Caco-2 (cell line): ENCODE measurements at regions of chr10 and their contacts with region 1.

Region 1: GRCh38 chr10:12042797-12043651 is at the start of gene UPF2:
- DNase-seq: peak; percentile 100
- H3K4me3 ChIP-seq: peak within 1 kb of the TSS; percentile 94
- H3K4me3 Mint-ChIP-seq: peak within 1 kb of the TSS; percentile 80
- H3K27ac Mint-ChIP-seq: peak within 1 kb of the TSS; percentile 94
- H3K4me1 ChIP-seq: peaks cover 14% of the 10 kb centered on the region
- H3K4me1 Mint-ChIP-seq: peaks cover 18% of the 10 kb centered on the region
- H3K27me3 ChIP-seq: no peaks in the 10 kb centered on the region
- H3K27me3 Mint-ChIP-seq: peaks cover 3% of the 10 kb centered on the region
- CTCF ChIP-seq: no peak
- total RNA-seq, gene UPF2: 40.6 and 40.9 TPM in 2 replicates

Region 2: GRCh38 chr10:11830836-11831519 is 212.0 kb before region 1 on chr10:
- CTCF ChIA-PET with region 1: no interaction called
- POLR2A ChIA-PET with region 1: interaction called, 5 read pairs
- intact Hi-C with region 1: loop called (anchors 5 kb)
- DNase-seq: peak; percentile 83 to 89
- H3K4me3 ChIP-seq: no peak overlapping the region
- H3K4me3 Mint-ChIP-seq: peak overlapping the region; percentile 71
- H3K27ac Mint-ChIP-seq: peak overlapping the region; percentile 91
- H3K4me1 ChIP-seq: peaks cover 69% of the 10 kb centered on the region
- H3K4me1 Mint-ChIP-seq: peaks cover 46% of the 10 kb centered on the region
- H3K27me3 ChIP-seq: no peaks in the 10 kb centered on the region
- H3K27me3 Mint-ChIP-seq: no peaks in the 10 kb centered on the region
- CTCF ChIP-seq: no peak

Region 3: DNA sequence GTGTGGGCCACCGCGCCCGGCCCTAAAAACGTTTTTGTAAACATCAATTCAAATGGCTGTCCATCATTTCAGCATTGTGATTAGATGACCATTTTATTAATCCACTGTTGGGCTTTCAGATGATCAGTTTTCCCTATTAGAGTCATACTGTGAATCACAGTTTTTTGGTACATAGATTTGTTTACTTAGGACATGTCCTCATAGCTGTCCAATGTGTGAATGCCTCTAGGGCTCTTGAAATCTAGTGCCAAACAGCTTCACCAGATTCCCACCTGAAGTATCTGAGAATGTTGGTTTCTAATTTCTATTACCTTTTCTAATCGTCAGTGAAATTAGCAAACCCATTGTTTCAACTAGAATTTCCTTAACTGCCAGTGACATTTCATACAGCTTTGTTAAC is 67.2 kb before region 1 on chr10:
- CTCF ChIA-PET with region 1: no interaction called
- POLR2A ChIA-PET with region 1: no interaction called
- intact Hi-C with region 1: no loop called
- DNase-seq: no peak
- H3K4me3 ChIP-seq: no peak overlapping the region
- H3K4me3 Mint-ChIP-seq: no peak overlapping the region
- H3K27ac Mint-ChIP-seq: no peak overlapping the region
- H3K4me1 ChIP-seq: no peaks in the 10 kb centered on the region
- H3K4me1 Mint-ChIP-seq: no peaks in the 10 kb centered on the region
- H3K27me3 ChIP-seq: no peaks in the 10 kb centered on the region
- H3K27me3 Mint-ChIP-seq: no peaks in the 10 kb centered on the region
- CTCF ChIP-seq: no peak

Region 4: DNA sequence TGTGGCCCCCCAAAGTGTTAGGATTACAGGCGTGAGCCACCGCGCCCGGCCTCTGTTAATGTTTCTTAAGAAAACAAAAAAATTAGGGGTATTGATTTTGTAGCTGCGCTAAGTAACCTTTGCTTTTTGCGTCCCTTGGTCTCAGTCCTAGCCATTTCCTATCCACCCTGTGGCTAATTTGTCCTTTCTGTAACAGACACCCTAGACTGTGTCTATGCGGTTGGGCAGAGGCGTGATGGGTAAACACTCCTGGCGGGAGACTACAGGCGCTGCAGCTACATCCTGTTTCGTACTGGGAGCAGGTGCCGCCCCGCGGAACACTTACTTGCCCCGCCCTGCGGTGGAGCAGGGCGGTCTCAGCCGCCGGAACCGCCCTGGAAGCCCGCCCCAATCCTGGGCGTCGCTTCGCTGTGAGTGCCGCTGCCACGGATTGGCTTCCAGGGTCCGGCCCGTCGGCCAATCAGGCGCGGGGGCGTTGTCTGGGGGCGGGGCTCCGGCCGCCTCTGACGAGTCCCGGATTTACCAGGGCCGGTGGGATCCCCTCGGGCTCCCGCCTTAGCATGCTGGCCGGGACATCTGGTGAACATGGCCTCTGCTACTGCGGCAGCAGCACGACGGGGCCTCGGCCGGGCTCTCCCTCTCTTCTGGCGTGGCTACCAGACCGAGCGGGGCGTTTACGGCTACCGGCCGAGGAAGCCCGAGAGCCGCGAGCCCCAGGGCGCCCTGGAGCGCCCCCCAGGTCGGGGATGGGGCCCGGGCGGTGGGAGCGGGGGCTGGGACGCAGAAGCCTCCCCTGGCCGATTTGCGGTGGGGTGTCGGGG is 25.6 kb after region 1 on chr10 and contains the start of gene DHTKD1:
- CTCF ChIA-PET with region 1: interaction called, 7 read pairs
- POLR2A ChIA-PET with region 1: interaction called, 25 read pairs
- intact Hi-C with region 1: loop called (anchors 1 kb)
- DNase-seq: peak; percentile 99 to 100
- H3K4me3 ChIP-seq: peak within 1 kb of the TSS; percentile 77
- H3K4me3 Mint-ChIP-seq: peak within 1 kb of the TSS; percentile 63
- H3K27ac Mint-ChIP-seq: peak within 1 kb of the TSS; percentile 66
- H3K4me1 ChIP-seq: peaks cover 9% of the 10 kb centered on the region; the same call in 1 of the 2 replicates
- H3K4me1 Mint-ChIP-seq: peaks cover 11% of the 10 kb centered on the region
- H3K27me3 ChIP-seq: no peaks in the 10 kb centered on the region
- H3K27me3 Mint-ChIP-seq: no peaks in the 10 kb centered on the region
- CTCF ChIP-seq: peak in 1 of 2 experiments; percentile 61
- total RNA-seq, gene DHTKD1: 57.8 and 61.4 TPM in 2 replicates

Region 5: GRCh38 chr10:12129222-12130111 is 86.4 kb after region 1 on chr10 and contains the start of gene SEC61A2:
- CTCF ChIA-PET with region 1: interaction called, 5 read pairs
- POLR2A ChIA-PET with region 1: no interaction called
- intact Hi-C with region 1: loop called (anchors 2 kb)
- DNase-seq: peak; percentile 97 to 100
- H3K4me3 ChIP-seq: peak within 1 kb of the TSS; percentile 98
- H3K4me3 Mint-ChIP-seq: peak within 1 kb of the TSS; percentile 79
- H3K27ac Mint-ChIP-seq: peak within 1 kb of the TSS; percentile 87
- H3K4me1 ChIP-seq: 0 out of 2 replicates have a peak, but pooled peaks cover 5% of the 10 kb centered on the region
- H3K4me1 Mint-ChIP-seq: peaks cover 6% of the 10 kb centered on the region
- H3K27me3 ChIP-seq: no peaks in the 10 kb centered on the region
- H3K27me3 Mint-ChIP-seq: no peaks in the 10 kb centered on the region
- CTCF ChIP-seq: no peak
- total RNA-seq, gene SEC61A2: 27.5 and 34.1 TPM in 2 replicates

Region 6: DNA sequence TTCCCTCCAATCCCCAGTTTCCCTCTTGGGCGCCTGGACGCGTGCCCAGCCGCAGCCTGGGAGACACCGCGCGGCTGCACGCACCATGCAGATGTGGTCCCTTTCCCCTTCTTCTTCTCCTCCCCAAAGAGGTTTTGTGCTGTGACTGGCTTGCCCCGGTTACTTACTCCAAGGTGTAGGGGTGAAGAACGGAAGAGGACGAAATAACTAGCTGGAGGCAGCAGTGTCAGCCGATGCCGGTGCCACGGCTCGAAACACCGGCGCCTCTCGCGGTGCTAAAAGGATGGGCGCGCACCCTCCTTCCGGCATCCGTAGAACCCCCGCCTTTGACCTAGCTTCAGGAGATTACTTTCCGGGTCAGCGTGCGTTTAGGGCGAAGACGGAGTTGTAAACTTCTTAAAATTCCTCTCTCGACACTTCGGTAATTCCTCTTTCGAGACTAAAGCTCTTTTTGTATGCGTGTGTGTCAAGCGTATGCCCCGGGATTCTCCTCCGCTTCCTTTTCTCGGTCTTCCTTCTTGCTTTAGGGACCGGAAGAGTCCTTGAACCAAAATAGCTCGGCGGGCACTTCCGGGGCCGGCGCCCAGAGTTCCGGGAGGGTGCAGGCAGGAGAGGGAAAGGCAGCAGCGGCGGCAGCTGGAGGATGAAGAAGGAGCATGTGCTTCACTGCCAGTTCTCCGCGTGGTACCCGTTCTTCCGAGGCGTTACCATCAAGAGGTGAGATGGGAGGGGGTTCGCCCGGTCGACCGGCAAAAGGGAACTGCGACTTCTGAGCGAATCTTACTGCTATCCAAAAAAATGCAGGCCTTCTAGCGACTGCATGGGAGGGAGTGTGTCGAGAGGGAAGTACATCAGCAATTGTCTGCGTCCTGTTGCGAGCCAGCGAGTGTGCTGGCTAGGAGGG is 152.8 kb after region 1 on chr10 and contains the starts of genes CDC123 and NUDT5:
- CTCF ChIA-PET with region 1: no interaction called
- POLR2A ChIA-PET with region 1: interaction called, 16 read pairs
- intact Hi-C with region 1: no loop called
- DNase-seq: peak; percentile 91 to 92
- H3K4me3 ChIP-seq: peak within 1 kb of the TSS; percentile 80
- H3K4me3 Mint-ChIP-seq: peak within 1 kb of the TSS; percentile 97
- H3K27ac Mint-ChIP-seq: peak within 1 kb of the TSS; percentile 95
- H3K4me1 ChIP-seq: peaks cover 5% of the 10 kb centered on the region
- H3K4me1 Mint-ChIP-seq: peaks cover 14% of the 10 kb centered on the region
- H3K27me3 ChIP-seq: no peaks in the 10 kb centered on the region
- H3K27me3 Mint-ChIP-seq: no peaks in the 10 kb centered on the region
- CTCF ChIP-seq: no peak
- total RNA-seq, gene CDC123: 190 and 199 TPM in 2 replicates
- total RNA-seq, gene NUDT5: 160 and 164 TPM in 2 replicates

Region 7: DNA sequence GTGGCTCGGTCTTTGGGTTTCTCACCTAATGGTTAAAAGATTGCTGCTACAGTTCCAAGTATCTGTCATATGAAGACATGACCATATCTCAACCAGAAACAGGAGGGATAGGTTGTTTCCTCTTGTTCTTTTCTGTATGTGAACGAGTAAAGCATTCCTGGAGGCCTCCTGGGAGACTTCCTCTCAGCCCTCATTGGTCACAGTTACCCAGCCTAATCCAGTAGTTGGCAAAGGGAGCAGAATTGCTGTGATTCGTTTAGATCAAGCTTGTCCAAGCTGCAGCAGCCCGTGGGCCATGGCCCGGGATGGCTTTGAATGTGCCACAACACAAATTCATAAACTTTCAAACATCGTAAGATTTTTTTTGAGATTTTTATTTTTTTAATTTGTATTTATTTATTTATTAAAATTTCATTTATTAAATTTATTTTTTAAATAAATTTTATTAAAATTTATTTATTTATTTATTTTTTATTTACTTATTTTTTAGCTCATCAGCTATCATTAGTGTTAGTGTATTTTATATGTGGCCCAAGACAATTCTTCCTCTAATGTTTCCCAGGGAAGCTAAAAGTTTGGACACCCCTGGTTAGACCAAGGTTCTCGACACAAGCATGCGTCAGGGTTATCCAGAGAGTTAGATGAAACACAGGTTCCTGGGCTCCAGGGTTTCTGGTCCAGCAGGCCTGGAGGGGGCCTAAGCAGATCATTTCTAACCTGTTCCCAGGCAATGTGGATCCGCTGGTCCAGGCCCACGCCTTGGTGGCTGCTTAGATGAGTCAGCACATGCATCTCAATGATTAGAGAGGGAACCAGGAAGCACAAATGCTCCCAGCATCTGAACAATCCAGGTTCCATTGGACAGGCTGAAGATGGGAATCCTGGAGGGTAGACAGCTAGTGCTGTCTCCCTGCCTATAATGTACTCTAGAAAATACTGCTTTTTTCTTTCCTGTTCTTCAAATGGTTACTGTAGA is 178.6 kb after region 1 on chr10:
- CTCF ChIA-PET with region 1: no interaction called
- POLR2A ChIA-PET with region 1: no interaction called
- intact Hi-C with region 1: no loop called
- DNase-seq: peak; percentile 45 to 66
- H3K4me3 ChIP-seq: no peak overlapping the region
- H3K4me3 Mint-ChIP-seq: no peak overlapping the region
- H3K27ac Mint-ChIP-seq: no peak overlapping the region
- H3K4me1 ChIP-seq: no peaks in the 10 kb centered on the region
- H3K4me1 Mint-ChIP-seq: no peaks in the 10 kb centered on the region
- H3K27me3 ChIP-seq: no peaks in the 10 kb centered on the region
- H3K27me3 Mint-ChIP-seq: no peaks in the 10 kb centered on the region
- CTCF ChIP-seq: no peak